GM12878 (cell line): ENCODE measurements at regions of chr2 and their contacts with region 1.

Region 1: GRCh38 chr2:47309952-47310800 is 92.8 kb upstream of the MSH2 start:
- DNase-seq: peak; percentile 100
- ATAC-seq: peak; percentile 87
- H3K4me3 ChIP-seq: peak overlapping the region; percentile 31; the same call in 1 of the 2 replicates
- H3K27ac ChIP-seq: peak overlapping the region; percentile 88
- H3K4me1 ChIP-seq: peaks cover 44% of the 10 kb centered on the region
- H3K27me3 ChIP-seq: no peaks in the 10 kb centered on the region
- CTCF ChIP-seq: no peak
- EP300 ChIP-seq: peak; percentile 90 to 97
- POLR2A ChIP-seq: peak; percentile 50; the same call in 1 of the 2 replicates
- RAD21 ChIP-seq: peak; percentile 26; the same call in 1 of the 2 replicates

Region 2: DNA sequence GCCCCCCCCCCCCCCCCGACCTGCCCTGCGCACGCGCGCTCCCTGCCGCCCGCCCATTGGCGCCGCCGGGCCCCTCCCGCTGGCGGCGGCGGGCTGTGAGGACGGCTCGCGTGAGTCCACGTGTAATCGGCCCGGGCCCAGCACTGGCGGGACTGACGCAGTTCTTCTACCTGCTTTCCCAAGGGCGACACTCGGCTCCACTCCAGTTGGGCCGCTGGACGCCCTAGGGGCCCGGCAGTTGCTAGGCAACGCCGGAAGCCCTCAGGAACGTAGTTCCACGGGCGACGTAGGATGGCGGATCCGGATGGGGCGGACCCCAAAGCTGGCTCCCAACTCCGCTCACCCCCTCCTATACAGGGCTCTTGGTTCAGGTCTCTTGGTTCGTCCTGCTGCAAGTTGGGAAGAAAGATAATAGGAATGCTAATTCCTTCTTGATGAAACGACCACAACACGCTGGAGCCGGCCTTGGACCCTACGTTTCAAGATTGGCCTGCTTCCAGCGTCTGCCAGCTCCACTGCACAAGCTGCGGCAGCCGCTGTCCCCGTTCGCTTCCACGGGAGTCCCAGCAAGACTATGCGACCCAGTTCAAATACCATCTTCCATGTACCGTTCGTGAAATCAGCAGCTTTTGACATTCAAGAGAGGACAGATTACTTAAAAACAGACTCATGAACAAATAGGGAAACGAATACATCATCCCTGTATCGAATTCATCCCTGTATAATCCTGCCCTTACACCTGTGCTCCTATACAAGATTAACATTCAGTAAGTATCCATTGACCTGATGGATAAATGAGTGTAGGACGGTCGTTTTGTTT is 394.2 kb before region 1 on chr2:
- CTCF ChIA-PET with region 1: interaction called, 11 read pairs
- POLR2A ChIA-PET with region 1: interaction called, 3 read pairs
- RAD21 ChIA-PET with region 1: interaction called, 4 read pairs
- SMC1A ChIA-PET with region 1: interaction called, 5 read pairs
- in situ Hi-C with region 1: loop called (anchors 5 kb)
- intact Hi-C with region 1: no loop called
- DNase-seq: peak; percentile 40
- ATAC-seq: peak; percentile 87
- H3K4me3 ChIP-seq: peak overlapping the region; percentile 84
- H3K27ac ChIP-seq: peak overlapping the region; percentile 64
- H3K4me1 ChIP-seq: peaks cover 16% of the 10 kb centered on the region
- H3K27me3 ChIP-seq: no peaks in the 10 kb centered on the region
- CTCF ChIP-seq: no peak
- EP300 ChIP-seq: no peak
- POLR2A ChIP-seq: peak; percentile 82
- RAD21 ChIP-seq: no peak

Region 3: DNA sequence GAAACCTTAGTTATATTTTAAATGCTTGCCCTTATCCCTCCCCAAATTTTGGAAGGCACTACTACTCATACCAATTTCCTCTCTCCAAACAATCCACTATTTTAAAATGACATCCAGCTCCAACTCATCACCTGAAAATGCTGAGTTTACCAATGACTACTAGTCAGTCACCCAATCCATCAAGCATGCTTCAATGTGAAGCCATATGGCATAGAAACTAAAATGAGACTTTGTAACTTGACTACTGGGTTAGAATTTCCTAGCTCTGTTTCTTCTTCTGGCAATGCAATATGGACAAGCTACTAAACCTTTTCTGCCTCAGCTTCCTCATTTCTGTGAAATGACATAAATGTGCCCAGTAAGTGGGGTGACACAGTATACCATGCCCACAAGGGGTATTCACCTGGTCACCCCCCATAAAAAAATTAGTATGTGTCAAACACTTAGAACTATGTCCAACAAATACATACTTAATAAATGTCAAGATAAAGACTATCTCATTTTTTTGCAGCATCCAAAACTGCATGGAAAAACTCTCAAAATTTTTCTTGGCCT is 145.1 kb before region 1 on chr2:
- CTCF ChIA-PET with region 1: no interaction called
- POLR2A ChIA-PET with region 1: interaction called, 9 read pairs
- RAD21 ChIA-PET with region 1: interaction called, 14 read pairs
- SMC1A ChIA-PET with region 1: interaction called, 3 read pairs
- in situ Hi-C with region 1: no loop called
- intact Hi-C with region 1: no loop called
- DNase-seq: no peak
- ATAC-seq: peak; percentile 25; the same call in 2 of the 3 replicates
- H3K4me3 ChIP-seq: no peak overlapping the region
- H3K27ac ChIP-seq: no peak overlapping the region
- H3K4me1 ChIP-seq: no peaks in the 10 kb centered on the region
- H3K27me3 ChIP-seq: no peaks in the 10 kb centered on the region
- CTCF ChIP-seq: no peak
- EP300 ChIP-seq: no peak
- POLR2A ChIP-seq: no peak
- RAD21 ChIP-seq: no peak

Region 4: GRCh38 chr2:47180531-47180930 is 129.6 kb before region 1 on chr2:
- CTCF ChIA-PET with region 1: interaction called, 10 read pairs
- POLR2A ChIA-PET with region 1: interaction called, 5 read pairs
- RAD21 ChIA-PET with region 1: no interaction called
- SMC1A ChIA-PET with region 1: interaction called, 8 read pairs
- in situ Hi-C with region 1: no loop called
- intact Hi-C with region 1: no loop called
- DNase-seq: no peak
- ATAC-seq: no peak
- H3K4me3 ChIP-seq: no peak overlapping the region
- H3K27ac ChIP-seq: no peak overlapping the region
- H3K4me1 ChIP-seq: peaks cover 7% of the 10 kb centered on the region; the same call in 1 of the 2 replicates
- H3K27me3 ChIP-seq: no peaks in the 10 kb centered on the region
- CTCF ChIP-seq: no peak
- EP300 ChIP-seq: no peak
- POLR2A ChIP-seq: no peak
- RAD21 ChIP-seq: no peak

Region 5: GRCh38 chr2:47295131-47295980 is 14.8 kb before region 1 on chr2:
- CTCF ChIA-PET with region 1: interaction called, 40 read pairs
- POLR2A ChIA-PET with region 1: interaction called, 82 read pairs
- RAD21 ChIA-PET with region 1: interaction called, 129 read pairs
- SMC1A ChIA-PET with region 1: interaction called, 145 read pairs
- in situ Hi-C with region 1: no loop called
- intact Hi-C with region 1: no loop called
- DNase-seq: no peak
- ATAC-seq: no peak
- H3K4me3 ChIP-seq: no peak overlapping the region
- H3K27ac ChIP-seq: no peak overlapping the region
- H3K4me1 ChIP-seq: peaks cover 4% of the 10 kb centered on the region
- H3K27me3 ChIP-seq: no peaks in the 10 kb centered on the region
- CTCF ChIP-seq: no peak
- EP300 ChIP-seq: no peak
- POLR2A ChIP-seq: no peak
- RAD21 ChIP-seq: no peak